ENCODE measurements at regions of chr11 and their contacts with region 1.

Region 1: DNA sequence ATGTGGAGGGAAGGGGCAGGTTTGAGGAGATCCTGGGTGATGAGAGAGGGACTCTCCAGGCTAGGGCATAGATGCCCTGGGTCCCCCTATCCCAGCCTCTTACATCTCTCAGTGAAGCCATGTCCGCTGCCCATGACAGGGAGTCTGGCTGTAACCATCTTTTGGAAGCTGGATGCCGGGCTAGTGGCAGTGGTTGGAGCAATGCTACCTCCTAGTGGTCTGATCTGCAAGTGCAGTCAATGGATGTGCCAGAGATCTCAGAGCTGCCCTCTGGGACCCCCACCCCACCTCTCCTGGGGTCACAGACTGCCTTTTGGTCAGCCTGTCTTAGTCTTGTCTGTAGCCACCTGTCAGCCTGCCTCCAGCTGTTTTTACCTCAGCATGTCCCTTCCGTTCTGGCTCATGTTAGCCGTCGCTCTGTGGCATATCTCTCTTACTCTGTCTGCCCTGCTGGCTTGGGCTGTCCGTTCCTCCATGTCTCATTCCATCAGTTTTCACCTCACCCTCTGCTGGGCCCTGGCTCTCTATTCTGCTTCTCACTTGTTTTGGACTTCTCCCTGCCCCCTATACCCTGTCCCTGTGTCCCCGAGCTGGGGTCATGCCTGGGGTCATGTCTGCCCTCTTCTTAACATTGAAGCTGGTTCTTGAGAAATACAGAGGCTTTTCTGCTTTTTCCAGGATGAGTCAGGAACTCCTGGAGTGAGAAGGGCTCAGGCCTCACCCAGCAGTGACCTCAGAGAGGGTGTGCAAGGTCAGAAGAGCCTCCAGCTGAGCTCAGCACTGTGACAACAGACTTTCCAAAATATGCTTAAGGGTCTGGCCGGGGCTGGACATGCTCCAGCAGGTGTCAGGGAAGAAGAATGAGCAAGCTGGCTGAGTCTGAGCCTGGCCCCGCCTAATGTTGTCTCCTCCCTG is 52.0 kb upstream of the THY1 start:
- DNase-seq: peak; percentile 65
- H3K4me3 ChIP-seq: no peak overlapping the region
- H3K27ac ChIP-seq: no peak overlapping the region
- H3K4me1 ChIP-seq: no peaks in the 10 kb centered on the region
- CTCF ChIP-seq: peak; percentile 88

Region 2: GRCh38 chr11:119338318-119338907 is 136.5 kb before region 1 on chr11:
- CTCF ChIA-PET with region 1: no interaction called
- POLR2A ChIA-PET with region 1: no interaction called
- intact Hi-C with region 1: loop called (anchors 5 kb)
- DNase-seq: peak; percentile 79
- H3K4me3 ChIP-seq: peak overlapping the region; percentile 10
- H3K27ac ChIP-seq: no peak overlapping the region
- H3K4me1 ChIP-seq: peaks cover 48% of the 10 kb centered on the region
- CTCF ChIP-seq: peak; percentile 95

Region 3: DNA sequence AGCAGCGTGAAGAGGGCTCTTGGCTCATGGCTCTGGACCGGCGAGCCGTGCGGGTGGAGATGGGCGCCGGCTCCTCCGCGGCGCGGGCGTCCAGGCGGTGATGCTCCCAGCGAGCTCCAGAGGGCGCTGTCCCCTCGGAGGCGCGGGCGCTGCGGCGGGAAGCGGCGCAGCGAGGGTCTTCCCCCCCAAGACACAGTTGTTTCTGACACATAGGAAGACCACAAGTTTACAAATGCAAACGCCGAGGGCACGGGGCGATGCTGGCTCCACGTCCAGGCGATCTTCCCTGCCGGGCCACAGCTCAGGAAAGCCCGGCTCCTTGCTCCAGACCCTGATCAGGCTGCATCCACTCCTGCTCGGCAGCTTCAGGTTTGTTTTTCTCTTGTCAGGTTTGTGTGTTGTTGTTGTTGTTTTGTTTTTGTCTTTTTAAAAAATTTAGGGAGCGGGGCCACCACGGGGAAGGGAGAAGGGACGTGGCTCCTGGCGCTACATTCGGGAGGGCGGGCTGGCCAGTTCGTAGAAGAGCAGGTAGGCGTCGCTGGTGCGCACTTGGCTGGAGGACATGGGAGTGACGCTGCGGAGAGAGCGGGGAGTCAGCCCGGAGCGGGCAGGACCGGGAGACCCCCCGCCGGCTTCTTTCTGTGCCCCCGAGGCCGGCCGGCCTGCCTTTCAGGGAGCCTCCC is 118.4 kb before region 1 on chr11:
- CTCF ChIA-PET with region 1: no interaction called
- POLR2A ChIA-PET with region 1: no interaction called
- intact Hi-C with region 1: loop called (anchors 1 kb)
- DNase-seq: peak; percentile 66
- H3K4me3 ChIP-seq: peak overlapping the region; percentile 27
- H3K27ac ChIP-seq: peak overlapping the region; percentile 16
- H3K4me1 ChIP-seq: peaks cover 52% of the 10 kb centered on the region
- CTCF ChIP-seq: peak; percentile 98

Region 4: GRCh38 chr11:119381181-119381988 is 93.6 kb before region 1 on chr11 and contains the start of gene USP2:
- CTCF ChIA-PET with region 1: interaction called, 4 read pairs
- POLR2A ChIA-PET with region 1: no interaction called
- intact Hi-C with region 1: loop called (anchors 2 kb)
- DNase-seq: peak; percentile 94
- H3K4me3 ChIP-seq: peak within 1 kb of the TSS; percentile 69
- H3K27ac ChIP-seq: no peak within 1 kb of the TSS
- H3K4me1 ChIP-seq: peaks cover 32% of the 10 kb centered on the region
- CTCF ChIP-seq: peak; percentile 92
- total RNA-seq, gene USP2: 4.3 and 10.6 TPM in 2 replicates

Region 5: GRCh38 chr11:119427279-119427678 is 47.7 kb before region 1 on chr11:
- CTCF ChIA-PET with region 1: no interaction called
- POLR2A ChIA-PET with region 1: no interaction called
- intact Hi-C with region 1: no loop called
- DNase-seq: no peak
- H3K4me3 ChIP-seq: no peak overlapping the region
- H3K27ac ChIP-seq: no peak overlapping the region
- H3K4me1 ChIP-seq: no peaks in the 10 kb centered on the region
- CTCF ChIP-seq: no peak

Measured in OCI-LY7 (cell line).